Activated naive CD4-positive, alpha-beta T cell treated with anti-CD3 and anti-CD28 coated beads for 36 hours (primary cell): ENCODE measurements at regions of chr5 and their contacts with region 1.

Region 1: GRCh38 chr5:146130440-146131045 is 25.2 kb upstream of the PLAC8L1 start:
- DNase-seq: no peak
- H3K4me3 Mint-ChIP-seq: no peak overlapping the region
- H3K27ac Mint-ChIP-seq: no peak overlapping the region
- H3K4me1 Mint-ChIP-seq: no peaks in the 10 kb centered on the region
- H3K27me3 Mint-ChIP-seq: no peaks in the 10 kb centered on the region

Region 2: DNA sequence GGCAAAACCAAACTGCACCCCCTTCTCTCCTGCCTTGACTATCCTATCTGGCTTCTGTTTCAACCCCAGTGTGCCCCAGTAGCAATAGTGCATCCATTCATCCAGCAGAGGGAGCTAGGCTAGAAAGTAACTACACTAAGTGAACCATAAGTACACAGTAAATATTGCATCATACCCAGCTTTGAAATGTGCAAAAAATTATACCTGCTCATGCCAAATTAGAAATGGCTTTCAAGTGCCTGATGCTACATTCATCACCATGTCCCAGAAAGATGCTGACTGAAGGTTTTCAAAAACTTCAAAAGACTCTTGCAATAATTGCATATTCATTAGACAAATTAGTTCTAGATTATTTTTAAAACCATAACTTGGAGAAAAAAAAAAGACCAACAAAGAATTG is 448.9 kb before region 1 on chr5:
- CTCF ChIA-PET with region 1: interaction called, 3 read pairs
- intact Hi-C with region 1: loop called (anchors 5 kb)
- DNase-seq: peak; percentile 62
- H3K4me3 Mint-ChIP-seq: no peak overlapping the region
- H3K27ac Mint-ChIP-seq: no peak overlapping the region
- H3K4me1 Mint-ChIP-seq: no peaks in the 10 kb centered on the region
- H3K27me3 Mint-ChIP-seq: no peaks in the 10 kb centered on the region

Region 3: DNA sequence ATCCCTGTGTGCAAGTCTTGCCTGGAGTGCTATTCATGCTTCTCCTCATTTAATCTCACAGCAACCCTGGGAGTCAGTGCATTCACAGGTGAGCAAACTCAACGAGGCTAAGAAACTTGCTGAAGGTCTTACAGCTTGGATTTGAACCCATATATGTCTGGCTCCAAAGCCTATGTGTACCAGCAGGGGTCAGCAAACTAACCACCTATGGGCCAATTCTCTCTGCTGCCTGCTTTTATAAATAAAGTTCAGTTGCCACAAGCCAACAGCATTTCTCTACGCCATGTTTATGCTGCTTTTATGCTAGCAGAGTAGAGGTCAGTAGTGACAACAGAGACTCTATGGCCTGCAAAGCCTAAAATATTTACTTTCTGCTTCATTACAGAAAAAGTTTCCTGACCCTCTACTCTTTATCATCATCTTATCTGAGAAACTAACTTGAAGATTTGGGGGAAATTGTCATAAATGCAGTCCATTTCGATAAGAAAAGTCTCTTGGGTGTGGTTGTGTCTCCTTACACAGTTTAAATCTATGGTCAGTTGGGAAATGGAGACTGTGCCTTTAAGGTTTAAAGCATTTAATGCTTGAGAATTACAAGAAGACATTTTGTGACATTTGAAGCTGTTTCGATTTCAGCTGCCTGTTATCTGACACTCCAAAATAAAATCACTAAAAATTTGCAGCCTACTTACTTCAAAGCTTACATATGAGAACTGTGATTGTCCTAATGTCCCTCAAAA is 433.1 kb before region 1 on chr5:
- CTCF ChIA-PET with region 1: no interaction called
- intact Hi-C with region 1: loop called (anchors 1 kb)
- DNase-seq: peak; percentile 29
- H3K4me3 Mint-ChIP-seq: no peak overlapping the region
- H3K27ac Mint-ChIP-seq: no peak overlapping the region
- H3K4me1 Mint-ChIP-seq: no peaks in the 10 kb centered on the region
- H3K27me3 Mint-ChIP-seq: no peaks in the 10 kb centered on the region

Region 4: GRCh38 chr5:145834917-145835847 is 295.4 kb before region 1 on chr5 and contains the start of gene PRELID2:
- CTCF ChIA-PET with region 1: no interaction called
- intact Hi-C with region 1: loop called (anchors 5 kb)
- DNase-seq: peak; percentile 33
- H3K4me3 Mint-ChIP-seq: peak within 1 kb of the TSS; percentile 25
- H3K27ac Mint-ChIP-seq: no peak within 1 kb of the TSS
- H3K4me1 Mint-ChIP-seq: no peaks in the 10 kb centered on the region
- H3K27me3 Mint-ChIP-seq: peaks cover 26% of the 10 kb centered on the region
- total RNA-seq, gene PRELID2: 0.12 to 0.17 TPM

Region 5: DNA sequence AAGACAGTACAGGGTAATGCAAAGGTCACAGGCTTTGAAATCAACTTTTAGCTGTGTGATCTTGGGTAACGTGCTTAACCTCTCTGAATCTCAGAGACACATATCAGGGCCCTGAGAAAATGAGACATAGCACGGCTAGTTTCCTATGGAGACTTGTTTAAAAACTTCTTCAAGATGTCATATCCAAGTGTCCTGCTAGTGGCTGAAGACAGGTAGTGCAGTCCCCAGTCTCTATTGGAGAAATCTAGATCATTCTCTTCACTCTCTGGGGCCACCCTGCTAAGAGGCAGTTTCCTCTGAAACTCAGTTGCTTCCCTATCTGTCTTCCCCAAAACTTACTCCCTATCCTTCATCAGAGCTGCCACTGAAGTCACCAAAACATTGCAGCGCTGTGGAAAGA is 227.4 kb before region 1 on chr5:
- CTCF ChIA-PET with region 1: no interaction called
- intact Hi-C with region 1: no loop called
- DNase-seq: no peak
- H3K4me3 Mint-ChIP-seq: no peak overlapping the region
- H3K27ac Mint-ChIP-seq: no peak overlapping the region
- H3K4me1 Mint-ChIP-seq: no peaks in the 10 kb centered on the region
- H3K27me3 Mint-ChIP-seq: no peaks in the 10 kb centered on the region

Region 6: GRCh38 chr5:146068977-146069779 is 61.4 kb before region 1 on chr5:
- CTCF ChIA-PET with region 1: no interaction called
- intact Hi-C with region 1: no loop called
- DNase-seq: no peak
- H3K4me3 Mint-ChIP-seq: no peak overlapping the region
- H3K27ac Mint-ChIP-seq: no peak overlapping the region
- H3K4me1 Mint-ChIP-seq: no peaks in the 10 kb centered on the region
- H3K27me3 Mint-ChIP-seq: peaks cover 5% of the 10 kb centered on the region

Region 7: DNA sequence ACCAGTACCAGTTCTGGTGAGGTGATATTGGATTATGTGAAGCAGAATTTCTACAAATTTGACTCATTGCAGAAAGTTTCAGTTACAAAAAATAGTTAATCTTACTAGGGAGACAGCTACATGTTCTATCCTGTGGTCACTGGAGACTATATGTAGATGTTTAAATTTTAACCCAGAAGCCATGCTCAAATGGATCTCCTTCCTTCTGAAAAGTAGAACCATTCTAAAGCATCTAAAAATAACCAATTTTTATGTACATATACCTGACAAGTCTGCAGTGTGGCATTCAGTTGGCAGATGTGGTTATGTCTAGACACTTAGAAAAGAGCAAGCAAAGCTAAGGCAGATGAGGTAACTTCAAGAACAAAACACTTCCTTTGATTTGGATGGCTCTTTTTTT is 142.6 kb after region 1 on chr5:
- CTCF ChIA-PET with region 1: no interaction called
- intact Hi-C with region 1: loop called (anchors 5 kb)
- DNase-seq: no peak
- H3K4me3 Mint-ChIP-seq: no peak overlapping the region
- H3K27ac Mint-ChIP-seq: no peak overlapping the region
- H3K4me1 Mint-ChIP-seq: no peaks in the 10 kb centered on the region
- H3K27me3 Mint-ChIP-seq: no peaks in the 10 kb centered on the region